Mammary epithelial cell (primary cell): ENCODE measurements at regions of chr6 and their contacts with region 1.

Region 1: DNA sequence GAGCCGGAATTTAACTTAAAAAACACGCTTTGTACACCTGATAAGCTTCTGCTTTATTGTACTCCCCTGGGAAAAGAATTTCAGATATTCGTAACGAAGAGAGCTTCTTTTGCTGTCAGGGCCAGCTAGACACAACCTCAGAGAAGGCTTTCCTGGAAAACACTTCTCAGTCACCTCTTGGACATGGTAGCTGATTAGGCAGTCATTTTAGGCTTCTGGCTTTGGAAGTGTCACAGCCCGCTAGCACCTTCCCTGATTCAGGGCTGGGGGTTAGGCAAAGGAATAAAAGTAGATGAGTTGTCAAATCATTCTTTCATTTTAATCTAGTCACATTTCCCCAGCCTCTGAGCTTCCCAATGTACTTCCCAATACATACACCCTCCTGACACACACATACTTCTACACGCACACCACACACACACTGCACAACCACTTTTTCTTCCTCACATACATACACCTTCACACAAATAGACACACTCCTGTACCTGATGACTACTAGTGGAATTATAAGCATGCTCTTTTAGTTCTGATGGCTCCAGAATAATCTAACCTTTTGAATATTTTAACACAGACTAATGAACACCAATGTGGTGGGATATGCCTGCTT is 34.9 kb upstream of the TINAG start:
- DNase-seq: no peak
- H3K4me3 ChIP-seq: no peak overlapping the region
- H3K27ac ChIP-seq: no peak overlapping the region
- H3K4me1 ChIP-seq: no peaks in the 10 kb centered on the region
- H3K27me3 ChIP-seq: no peaks in the 10 kb centered on the region
- CTCF ChIP-seq: no peak

Region 2: GRCh38 chr6:54770328-54770727 is 497.0 kb after region 1 on chr6:
- CTCF ChIA-PET with region 1: no interaction called
- dilution Hi-C with region 1: no loop called
- in situ Hi-C with region 1: no loop called
- intact Hi-C with region 1: loop called (anchors 5 kb)
- DNase-seq: no peak
- H3K4me3 ChIP-seq: no peak overlapping the region
- H3K27ac ChIP-seq: no peak overlapping the region
- H3K4me1 ChIP-seq: no peaks in the 10 kb centered on the region
- H3K27me3 ChIP-seq: no peaks in the 10 kb centered on the region
- CTCF ChIP-seq: no peak

Region 3: GRCh38 chr6:55082021-55082420 is 808.7 kb after region 1 on chr6:
- CTCF ChIA-PET with region 1: no interaction called
- dilution Hi-C with region 1: no loop called
- in situ Hi-C with region 1: no loop called
- intact Hi-C with region 1: no loop called
- DNase-seq: peak; percentile 20
- H3K4me3 ChIP-seq: no peak overlapping the region
- H3K27ac ChIP-seq: no peak overlapping the region
- H3K4me1 ChIP-seq: no peaks in the 10 kb centered on the region
- H3K27me3 ChIP-seq: no peaks in the 10 kb centered on the region
- CTCF ChIP-seq: no peak